ENCODE measurements at regions of chr9 and their contacts with region 1.

Region 1: DNA sequence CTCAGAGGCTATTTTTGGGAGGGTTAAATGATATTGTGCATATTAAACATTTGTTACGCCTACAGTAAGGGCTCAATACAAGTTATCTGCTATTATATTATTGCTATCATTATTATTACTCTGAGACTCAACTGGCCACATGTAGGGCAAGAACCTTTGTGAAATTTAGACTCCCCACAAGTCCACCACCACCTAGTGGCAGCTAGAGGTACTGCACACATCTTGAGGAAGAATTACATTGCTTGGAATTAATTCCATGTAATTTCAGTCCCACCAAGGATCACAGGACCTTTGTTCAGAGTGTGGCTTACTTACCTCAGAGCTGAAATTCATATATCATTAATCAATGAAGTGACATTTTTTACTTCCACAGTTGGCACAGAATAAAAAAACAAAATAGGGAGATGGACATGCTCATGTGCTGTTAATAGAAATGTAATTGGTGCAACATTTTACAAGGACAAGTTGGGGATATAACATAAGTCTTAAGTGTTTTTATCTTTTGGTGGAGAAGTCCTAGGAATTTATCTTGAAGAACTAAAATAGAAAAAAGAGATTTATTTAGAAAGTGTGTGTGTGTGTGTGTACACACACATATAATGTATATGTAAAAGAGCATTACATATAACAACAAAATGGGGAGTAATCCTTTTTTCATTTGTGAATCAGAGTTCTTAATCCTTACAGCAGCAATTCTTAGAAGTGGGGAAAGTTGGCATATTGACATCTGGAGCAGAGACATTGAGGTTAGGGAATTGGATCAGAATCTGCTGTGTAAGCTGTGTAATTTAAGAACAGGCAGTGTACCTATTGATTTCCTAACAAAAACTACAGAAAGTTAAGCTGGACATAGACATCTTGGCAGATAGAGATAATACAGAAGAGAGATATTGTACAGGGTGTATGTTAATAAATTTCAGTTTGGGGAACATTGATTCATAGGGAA is 11.2 kb downstream of the MSANTD3 start:
- DNase-seq: peak; percentile 78 to 93
- H3K4me3 ChIP-seq: no peak overlapping the region
- CTCF ChIP-seq: peak in 1 of 3 donors; percentile 69
- POLR2A ChIP-seq: no peak

Region 2: DNA sequence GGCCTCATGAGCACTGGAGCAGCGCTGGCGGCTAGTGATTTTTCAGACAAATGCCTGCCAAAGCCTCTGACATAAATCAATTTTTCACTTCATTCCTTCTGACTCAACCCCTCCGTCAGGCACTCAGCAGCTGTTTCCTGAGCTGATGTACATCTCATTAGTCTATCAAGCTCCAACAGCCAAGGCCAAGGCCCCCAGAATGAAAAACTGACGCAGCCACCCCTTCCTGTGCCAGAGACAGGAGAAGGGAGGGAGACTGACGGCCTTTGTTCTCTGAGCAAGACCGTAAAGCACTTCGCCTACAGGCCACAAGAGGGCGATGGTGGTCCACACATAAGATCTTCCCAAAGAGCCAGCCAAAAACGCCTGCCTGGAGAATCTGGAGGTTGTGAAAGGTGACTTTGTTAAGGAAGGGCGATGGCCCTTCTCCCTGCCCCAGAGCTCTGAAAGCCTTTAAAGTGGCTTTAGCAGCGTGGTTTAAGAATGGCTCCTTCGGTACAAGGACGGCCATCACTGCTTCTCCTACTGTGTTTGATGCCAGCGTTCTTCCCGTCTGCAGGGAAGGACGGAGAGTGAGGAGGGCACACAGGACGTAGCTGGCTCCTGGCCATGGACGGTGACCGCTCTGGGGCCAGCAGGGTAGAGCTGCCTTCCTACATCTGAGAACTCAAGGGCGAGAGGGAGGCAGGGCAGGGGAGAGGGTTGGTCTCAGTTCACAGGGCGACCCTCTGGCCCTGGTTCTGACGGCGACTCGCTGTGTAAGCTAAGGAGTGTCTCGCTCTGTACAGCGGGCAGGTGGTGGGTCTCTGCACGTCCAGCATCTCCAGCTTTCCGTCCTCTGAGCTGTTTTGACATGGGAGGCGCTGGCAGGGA is 1253.4 kb before region 1 on chr9:
- intact Hi-C with region 1: loop called (anchors 10 kb)
- DNase-seq: peak; percentile 91 to 97
- H3K4me3 ChIP-seq: no peak overlapping the region
- CTCF ChIP-seq: peak in 1 of 3 donors; percentile 78
- POLR2A ChIP-seq: no peak

Region 3: DNA sequence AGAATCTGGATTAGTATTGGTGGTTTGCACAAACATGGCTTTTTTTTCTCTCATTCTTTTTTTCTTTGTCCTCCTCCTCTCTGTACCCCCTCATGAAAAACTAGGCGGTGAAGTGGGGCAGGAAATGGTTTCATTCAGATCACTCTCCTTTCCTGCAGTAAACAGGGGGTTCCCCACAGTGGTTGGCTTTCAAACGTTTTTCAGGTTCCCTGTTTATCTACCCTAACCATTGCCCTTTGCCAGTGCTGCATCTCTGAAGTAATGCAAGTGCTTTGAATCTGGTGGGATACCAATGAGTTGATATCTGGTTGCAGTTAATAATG is 586.7 kb before region 1 on chr9:
- intact Hi-C with region 1: no loop called
- DNase-seq: no peak
- H3K4me3 ChIP-seq: no peak overlapping the region
- CTCF ChIP-seq: no peak
- POLR2A ChIP-seq: no peak

Measured in lower leg skin (tissue), 4 donors.